GM13977 (cell line): ENCODE measurements at regions of chr1 and their contacts with region 1.

Region 1: DNA sequence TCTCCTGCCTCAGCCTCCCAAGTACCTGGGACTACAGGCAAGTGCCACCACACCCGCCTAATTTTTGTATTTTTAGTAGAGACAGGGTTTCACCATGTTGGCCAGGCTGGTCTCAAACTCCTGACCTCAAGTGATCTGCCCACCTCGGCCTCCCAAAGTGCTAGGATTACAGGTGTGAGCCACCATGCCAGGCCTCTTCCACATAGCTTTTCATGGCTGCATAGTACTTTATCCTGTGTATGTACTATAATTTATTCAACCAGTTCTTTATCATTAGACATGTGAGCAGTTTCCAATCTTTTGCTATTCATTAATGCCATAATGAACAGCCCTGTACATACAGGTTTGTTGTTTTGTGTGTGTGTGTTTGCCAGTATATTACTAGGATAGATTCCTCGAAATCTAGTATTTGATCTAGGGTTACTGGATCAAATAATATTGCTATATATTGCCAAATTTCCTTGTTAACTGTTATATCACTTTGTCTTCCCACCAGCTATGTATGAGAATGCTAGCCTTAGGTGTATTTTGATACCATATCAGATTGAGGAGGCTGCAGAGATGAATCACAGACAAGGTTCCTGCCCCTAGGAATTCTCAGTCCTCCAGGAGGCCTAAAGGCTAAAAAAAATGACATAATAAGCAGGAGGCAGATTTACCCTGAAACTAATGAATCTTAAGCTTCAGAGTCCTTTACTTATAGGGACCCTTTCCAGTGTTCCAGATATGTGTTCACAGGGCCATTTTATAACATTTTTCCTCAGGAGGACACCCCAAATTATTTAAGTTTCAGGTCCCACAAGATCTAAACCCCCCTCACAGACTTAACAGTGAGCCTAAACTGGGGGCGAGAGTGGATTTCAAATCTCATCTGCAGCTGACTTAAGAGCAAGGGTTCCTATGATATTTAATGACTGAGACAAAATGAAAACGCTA is 2.1 kb upstream of the PDIK1L start:
- DNase-seq: no peak
- CTCF ChIP-seq: no peak

Region 2: DNA sequence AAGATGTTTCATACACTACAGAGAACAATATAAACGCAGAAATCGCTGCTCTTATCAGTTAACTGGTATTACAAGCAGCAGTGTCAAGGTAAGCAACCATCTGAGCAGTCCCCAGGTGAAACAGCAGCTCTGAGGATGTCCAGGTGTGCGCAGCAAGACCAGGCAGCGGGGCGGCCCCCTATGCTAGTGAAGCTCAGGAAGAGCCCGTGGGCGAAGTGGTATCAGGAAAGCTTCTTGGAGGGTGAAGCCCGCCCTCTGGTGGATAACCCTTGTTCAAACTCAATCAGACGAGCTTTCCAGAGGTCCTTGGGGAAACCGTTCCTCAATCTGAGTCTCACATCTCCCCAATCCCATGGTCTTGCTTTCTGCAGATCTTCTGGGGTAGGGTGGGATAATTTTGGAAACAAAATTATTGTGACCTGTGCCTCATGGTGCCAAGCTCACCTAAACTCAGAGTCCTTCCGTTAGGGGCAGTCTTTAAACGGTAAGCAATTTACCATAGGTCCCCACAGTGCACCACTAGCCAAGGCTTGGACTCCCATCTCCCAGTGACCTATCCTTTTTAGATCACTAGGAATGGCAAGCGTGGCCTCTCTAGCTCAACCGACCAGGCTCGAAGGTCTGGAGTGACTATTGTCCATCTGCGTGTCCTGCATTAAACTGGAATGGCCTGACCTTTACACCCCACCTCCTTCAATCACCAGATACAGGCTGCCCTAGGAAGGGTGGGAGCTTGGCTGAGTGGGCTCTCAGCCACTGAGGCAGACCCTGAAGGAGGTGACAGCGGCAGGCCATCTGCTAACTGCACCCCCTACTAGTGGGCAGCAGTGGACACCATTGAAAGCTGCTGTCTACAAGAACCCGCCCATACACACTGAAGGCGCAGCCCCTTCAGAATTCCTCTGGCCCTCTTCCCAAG is 35.8 kb after region 1 on chr1:
- in situ Hi-C with region 1: loop called (anchors 5 kb)
- DNase-seq: peak; percentile 67
- CTCF ChIP-seq: peak; percentile 69